ENCODE measurements at regions of chr9 and their contacts with region 1.

Region 1: GRCh38 chr9:128448746-128449145 is 7.1 kb upstream of the ODF2 start:
- DNase-seq: no peak
- H3K4me3 ChIP-seq: no peak overlapping the region
- H3K27ac ChIP-seq: no peak overlapping the region
- H3K4me1 ChIP-seq: no peaks in the 10 kb centered on the region
- H3K27me3 ChIP-seq: no peaks in the 10 kb centered on the region
- CTCF ChIP-seq: no peak

Region 2: DNA sequence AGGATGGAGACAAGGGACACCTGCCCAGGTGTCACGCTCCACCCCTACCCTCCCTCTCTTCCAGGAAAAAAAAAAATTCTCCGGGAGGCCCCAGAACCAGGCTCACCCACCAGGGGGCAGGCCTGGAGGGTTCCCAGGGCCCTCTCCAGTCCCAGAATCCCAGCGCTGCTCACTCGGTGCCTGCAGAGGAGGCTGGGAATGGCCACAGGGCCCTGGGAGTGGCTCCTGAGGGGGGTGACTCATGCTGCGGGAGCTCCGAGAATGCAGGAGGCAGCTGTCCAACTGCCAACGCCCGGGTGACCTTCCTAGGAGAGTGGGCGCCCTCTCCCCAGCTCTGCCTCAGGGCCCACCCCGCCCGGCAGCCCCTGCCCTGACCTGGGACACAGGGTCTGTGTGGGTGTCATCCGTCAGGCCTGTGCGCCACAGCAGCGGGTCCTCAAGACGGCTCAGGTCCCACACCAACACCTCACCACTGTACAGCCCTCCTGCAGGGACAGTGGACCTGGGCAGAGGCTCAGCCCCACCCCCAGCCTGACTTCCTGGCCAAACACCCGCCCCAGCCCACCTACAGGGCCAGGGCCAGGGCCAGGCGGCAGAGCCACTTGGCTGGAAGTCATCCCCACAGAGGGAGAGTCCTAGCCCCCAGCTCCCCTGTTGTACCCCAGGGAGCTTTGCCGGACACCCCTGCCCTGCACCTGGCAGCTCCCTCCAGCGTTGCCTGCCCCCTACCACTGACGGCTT is 186.7 kb after region 1 on chr9:
- CTCF ChIA-PET with region 1: interaction called, 12 read pairs
- POLR2A ChIA-PET with region 1: no interaction called
- intact Hi-C with region 1: no loop called
- DNase-seq: peak; percentile 88
- H3K4me3 ChIP-seq: no peak overlapping the region
- H3K27ac ChIP-seq: peak overlapping the region; percentile 54
- H3K4me1 ChIP-seq: no peaks in the 10 kb centered on the region
- H3K27me3 ChIP-seq: no peaks in the 10 kb centered on the region
- CTCF ChIP-seq: peak; percentile 60

Measured in A673 (cell line).